ENCODE measurements at regions of chr16 and their contacts with region 1.

Region 1: GRCh38 chr16:81035398-81035974 is at the start of gene ATMIN:
- DNase-seq: peak; percentile 89
- H3K4me3 ChIP-seq: peak within 1 kb of the TSS; percentile 61 to 84 (median 71)
- H3K27ac ChIP-seq: peak within 1 kb of the TSS; percentile 60 to 86 (median 78)
- H3K4me1 ChIP-seq: peaks cover 0 to 32% (median 23%) of the 10 kb centered on the region in 4 donors
- H3K27me3 ChIP-seq: no peaks in the 10 kb centered on the region
- CTCF ChIP-seq: peak; percentile 82 to 98 (median 90)
- EP300 ChIP-seq: no peak
- POLR2A ChIP-seq: no peak
- total RNA-seq, gene ATMIN: 26.3 to 31.9 (median 28.4) TPM

Region 2: DNA sequence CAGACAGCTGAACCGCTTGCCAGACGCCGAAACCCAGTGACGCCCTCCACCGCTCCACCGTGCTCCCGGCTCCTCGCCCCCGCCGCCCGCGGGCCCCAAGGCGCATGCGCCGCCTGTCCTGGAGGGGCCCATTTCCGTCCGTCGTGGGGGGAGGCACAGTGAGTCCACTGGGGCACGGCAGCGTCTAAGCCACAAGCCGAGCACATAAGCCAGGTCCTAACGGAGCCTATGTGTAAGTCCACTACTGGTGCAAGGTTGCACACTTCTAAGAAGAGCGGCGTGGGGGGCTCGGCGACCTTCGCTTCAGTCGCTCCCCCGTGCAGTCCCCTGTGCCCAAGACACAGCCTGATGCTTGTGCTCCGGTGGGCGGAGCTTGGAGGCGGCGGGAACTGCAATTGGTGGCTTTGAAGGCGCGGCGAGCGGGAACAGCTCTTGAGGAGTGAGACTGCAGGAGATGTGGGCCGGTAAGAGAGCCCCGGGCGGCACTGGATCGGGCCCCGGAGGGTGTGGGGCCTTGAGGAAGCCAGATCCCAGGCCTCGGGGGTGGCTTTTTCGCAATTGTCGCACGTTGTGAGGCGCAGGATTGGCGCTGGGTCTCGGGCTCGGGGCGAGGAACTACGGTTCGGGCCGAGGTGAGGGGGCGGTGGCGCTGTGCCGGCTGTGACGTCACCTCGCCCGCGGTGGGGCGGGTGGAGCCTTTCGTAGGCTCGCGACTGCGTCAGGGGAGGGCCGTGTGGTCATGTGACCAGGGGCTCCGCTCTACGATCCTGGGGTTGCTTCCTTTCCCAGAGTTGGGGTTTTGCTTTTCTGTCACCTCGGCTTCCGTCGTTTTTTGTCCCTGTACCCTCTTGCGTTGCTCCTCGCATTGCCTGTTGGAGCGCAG is 28.4 kb before region 1 on chr16 and contains the starts of genes CENPN and CMC2:
- intact Hi-C with region 1: loop called (anchors 2 kb)
- DNase-seq: peak; percentile 100
- H3K4me3 ChIP-seq: peak within 1 kb of the TSS; percentile 80 to 94 (median 88)
- H3K27ac ChIP-seq: peak within 1 kb of the TSS; percentile 97 to 100 (median 98)
- H3K4me1 ChIP-seq: peaks cover 0 to 29% (median 22%) of the 10 kb centered on the region in 4 donors
- H3K27me3 ChIP-seq: no peaks in the 10 kb centered on the region
- CTCF ChIP-seq: no peak
- EP300 ChIP-seq: peak in 2 of 4 donors; percentile 2 to 79
- POLR2A ChIP-seq: peak; percentile 86 to 88
- total RNA-seq, gene CENPN: 3.8 to 5.3 (median 4.2) TPM
- total RNA-seq, gene CMC2: 35.2 to 54.6 (median 45.7) TPM

Region 3: DNA sequence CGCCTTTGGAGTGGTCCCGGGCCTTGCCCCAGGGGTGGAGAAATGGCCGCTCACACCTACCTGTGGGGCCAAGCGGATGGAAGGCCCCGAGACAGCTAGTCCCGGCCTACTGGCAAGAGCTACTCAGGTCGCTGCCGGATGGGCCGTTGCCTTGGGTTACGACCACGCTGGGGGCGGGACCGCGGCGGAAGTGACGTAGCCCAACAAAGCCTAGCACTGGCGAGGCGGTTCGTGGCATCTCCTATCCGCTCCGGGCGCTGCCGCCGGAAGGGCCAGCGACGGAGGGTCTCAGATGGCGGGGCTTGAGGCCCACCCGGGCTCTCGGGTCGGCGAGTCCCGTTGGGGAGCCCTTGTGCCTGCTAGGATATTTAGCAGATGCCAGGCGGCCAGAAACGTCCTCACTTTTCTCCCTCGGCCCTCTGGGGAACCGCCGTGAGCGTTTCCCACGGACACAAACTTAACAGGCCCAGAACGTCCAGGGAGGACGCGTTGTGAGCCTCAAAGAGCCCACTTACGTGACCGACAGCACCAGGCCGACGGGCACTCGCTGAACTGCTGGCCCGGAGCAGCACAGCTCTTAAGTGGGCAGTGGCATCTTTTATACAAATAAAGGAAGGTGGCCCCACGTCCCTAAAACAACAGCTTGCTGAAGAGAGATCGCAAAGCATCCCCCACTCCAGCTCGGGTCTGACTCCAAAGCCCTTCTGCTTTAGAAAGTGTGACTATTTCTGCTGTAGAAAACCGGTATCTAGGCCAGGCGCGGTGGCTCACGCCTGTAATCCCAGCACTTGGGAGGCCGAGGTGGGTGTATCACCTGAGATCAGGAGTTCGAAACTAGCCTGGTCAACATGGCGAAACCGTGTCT is 41.8 kb after region 1 on chr16 and contains the start of gene C16orf46:
- intact Hi-C with region 1: loop called (anchors 2 kb)
- DNase-seq: peak; percentile 99
- H3K4me3 ChIP-seq: peak within 1 kb of the TSS; percentile 51 to 79 (median 70)
- H3K27ac ChIP-seq: peak within 1 kb of the TSS; percentile 90 to 97 (median 96)
- H3K4me1 ChIP-seq: peaks cover 0 to 5% (median 2%) of the 10 kb centered on the region in 4 donors
- H3K27me3 ChIP-seq: no peaks in the 10 kb centered on the region
- CTCF ChIP-seq: no peak
- EP300 ChIP-seq: peak in 2 of 4 donors; percentile 3 to 4
- POLR2A ChIP-seq: peak; percentile 80 to 86
- total RNA-seq, gene C16orf46: 0.27 to 1.1 TPM in 2 of 4 donors, not detected in the others

Region 4: DNA sequence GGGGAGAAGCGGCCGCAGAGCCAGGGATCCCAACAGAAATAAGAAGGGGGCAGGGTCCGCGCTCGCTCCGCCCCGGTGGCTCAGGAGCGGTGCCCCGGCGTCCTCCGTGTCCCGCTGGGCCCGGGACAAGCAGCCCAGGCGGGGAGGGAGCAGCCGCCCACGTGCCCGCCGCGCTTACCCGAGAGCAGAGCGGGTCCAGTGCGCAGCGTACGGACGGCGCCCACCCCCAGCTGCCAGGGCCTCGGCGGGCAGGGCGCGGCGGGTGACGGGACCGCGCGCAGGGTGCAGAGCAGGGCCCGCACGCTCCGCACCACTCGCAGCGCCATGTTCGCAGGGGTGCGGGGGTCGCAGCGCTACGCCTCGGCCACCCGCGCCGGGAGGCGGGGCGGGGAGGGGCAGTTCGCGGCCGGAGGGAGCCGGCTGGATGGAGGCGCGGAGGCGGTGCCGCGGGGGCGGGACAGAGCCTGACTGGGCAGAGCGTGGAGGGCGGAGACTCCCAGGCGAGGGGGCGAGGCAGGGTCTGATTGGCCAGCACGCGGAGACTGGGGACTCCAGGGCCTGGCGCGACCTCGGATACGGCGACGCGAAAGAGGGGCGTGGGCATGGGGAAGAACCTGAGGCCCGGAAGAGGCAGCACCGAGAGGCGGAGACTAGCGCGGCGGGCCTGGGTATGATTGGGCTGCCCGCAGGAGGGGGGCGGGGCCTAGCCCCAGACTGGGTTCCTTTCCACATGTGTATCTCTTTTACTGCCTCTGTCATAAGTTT is 60.6 kb after region 1 on chr16 and contains the start of gene GCSH:
- intact Hi-C with region 1: loop called (anchors 5 kb)
- DNase-seq: peak; percentile 99
- H3K4me3 ChIP-seq: peak within 1 kb of the TSS; percentile 52 to 90 (median 79)
- H3K27ac ChIP-seq: peak within 1 kb of the TSS; percentile 83 to 87 (median 84)
- H3K4me1 ChIP-seq: peaks cover 0 to 12% (median 2%) of the 10 kb centered on the region in 4 donors
- H3K27me3 ChIP-seq: no peaks in the 10 kb centered on the region
- CTCF ChIP-seq: no peak
- EP300 ChIP-seq: no peak
- POLR2A ChIP-seq: no peak
- total RNA-seq, gene GCSH: 18.3 to 27.8 (median 23.6) TPM

Region 5: GRCh38 chr16:81204798-81205680 is 169.6 kb after region 1 on chr16:
- intact Hi-C with region 1: loop called (anchors 10 kb)
- DNase-seq: peak; percentile 76
- H3K4me3 ChIP-seq: no peak overlapping the region
- H3K27ac ChIP-seq: no peak overlapping the region
- H3K4me1 ChIP-seq: no peaks in the 10 kb centered on the region
- H3K27me3 ChIP-seq: no peaks in the 10 kb centered on the region
- CTCF ChIP-seq: peak; percentile 19 to 74 (median 61)
- EP300 ChIP-seq: no peak
- POLR2A ChIP-seq: no peak

Region 6: GRCh38 chr16:81737885-81738786 is 702.6 kb after region 1 on chr16:
- intact Hi-C with region 1: loop called (anchors 5 kb)
- DNase-seq: peak; percentile 89
- H3K4me3 ChIP-seq: peak overlapping the region in 2 of 4 donors; percentile 22 to 32
- H3K27ac ChIP-seq: peak overlapping the region in 2 of 4 donors; percentile 40 to 47
- H3K4me1 ChIP-seq: peaks cover 0 to 11% (median 10%) of the 10 kb centered on the region in 4 donors
- H3K27me3 ChIP-seq: no peaks in the 10 kb centered on the region
- CTCF ChIP-seq: peak; percentile 78 to 85 (median 82)
- EP300 ChIP-seq: no peak
- POLR2A ChIP-seq: no peak